Naive thymus-derived CD8-positive, alpha-beta T cell (primary cell): ENCODE measurements at regions of chr17 and their contacts with region 1.

Region 1: DNA sequence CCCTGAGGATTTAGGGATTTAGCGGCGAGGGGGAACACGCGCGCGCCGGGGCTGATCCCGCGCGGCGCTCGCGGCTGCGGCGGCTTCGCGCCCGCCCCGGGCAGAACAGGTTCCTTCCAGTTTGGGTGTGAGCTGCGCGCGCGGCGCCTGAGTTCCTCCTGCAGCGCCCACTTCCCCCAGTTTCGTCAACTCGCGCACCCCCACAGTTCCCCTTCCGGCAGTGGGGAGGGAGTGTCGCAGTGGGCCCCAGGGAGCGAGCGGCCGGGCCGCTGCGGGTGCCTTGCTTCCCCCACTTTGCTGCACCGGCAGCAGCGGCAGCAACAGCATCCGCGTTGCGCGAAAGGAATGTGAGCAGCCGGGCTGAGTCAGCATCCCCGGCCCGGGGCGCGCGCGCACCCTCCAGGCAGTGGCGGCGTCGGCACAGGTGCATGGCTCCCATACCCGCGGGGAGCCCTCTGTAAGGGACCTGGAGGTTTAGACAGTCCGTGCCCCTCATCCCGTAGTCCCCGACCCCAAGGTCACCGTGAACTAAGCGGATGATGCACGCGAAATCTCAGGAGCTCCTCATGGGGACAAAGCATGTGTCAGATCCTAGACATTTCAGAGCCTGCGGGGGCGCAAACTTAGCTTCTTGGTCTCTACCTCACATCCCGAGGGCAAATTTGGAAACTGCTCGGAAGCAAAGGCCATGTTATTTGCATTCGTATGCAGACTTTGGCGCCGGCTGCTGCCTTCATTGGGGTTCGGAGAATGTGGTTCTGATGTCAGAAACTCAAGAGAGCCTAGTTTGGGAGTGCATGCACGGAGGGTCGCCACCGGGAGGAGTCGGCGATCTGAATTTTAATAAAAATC is 775 bp downstream of the ARSG start:
- DNase-seq: peak; percentile 85 to 98 (median 96)
- ATAC-seq: peak; percentile 69 to 71
- H3K4me3 Mint-ChIP-seq: peak overlapping the region; percentile 77 to 94 (median 84)
- H3K27ac Mint-ChIP-seq: peak overlapping the region; percentile 81 to 95 (median 91)
- H3K4me1 Mint-ChIP-seq: peaks cover 38 to 72% (median 70%) of the 10 kb centered on the region in 4 donors
- H3K27me3 Mint-ChIP-seq: no peaks in the 10 kb centered on the region

Region 2: DNA sequence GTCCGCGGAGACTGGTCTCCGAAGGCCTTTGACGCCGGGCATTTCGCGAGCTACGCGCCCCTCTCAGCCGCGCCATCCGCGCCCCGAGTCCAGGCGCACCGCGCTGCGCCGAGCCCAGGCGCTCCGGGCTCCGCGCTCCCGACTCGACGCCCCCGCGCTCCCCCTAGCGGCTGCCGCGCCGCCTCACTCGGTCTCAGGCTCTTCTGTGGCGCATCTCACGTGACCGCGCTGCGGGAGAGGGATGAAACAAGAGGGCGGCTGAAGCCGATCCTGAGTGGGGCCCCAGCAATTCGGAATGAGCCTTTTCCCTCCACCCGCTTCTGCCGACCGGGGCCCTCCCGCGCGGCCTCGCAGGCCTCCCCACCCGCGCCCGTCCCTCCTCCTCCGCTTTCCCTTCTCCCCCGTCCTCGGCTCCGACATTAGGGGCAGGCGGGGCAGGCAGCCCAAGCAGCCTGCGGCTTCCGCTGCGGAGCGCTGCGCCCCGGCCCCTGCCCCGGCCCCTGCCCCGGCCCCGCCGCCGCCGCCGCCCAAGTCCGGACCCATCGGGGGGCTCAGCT is 86.7 kb before region 1 on chr17:
- POLR2A ChIA-PET with region 1: interaction called, 35 read pairs
- DNase-seq: peak; percentile 81 to 95 (median 92)
- ATAC-seq: peak; percentile 80 to 81
- H3K4me3 Mint-ChIP-seq: peak overlapping the region; percentile 78 to 95 (median 87)
- H3K27ac Mint-ChIP-seq: peak overlapping the region; percentile 43 to 97 (median 91)
- H3K4me1 Mint-ChIP-seq: peaks cover 11 to 43% (median 22%) of the 10 kb centered on the region in 4 donors
- H3K27me3 Mint-ChIP-seq: no peaks in the 10 kb centered on the region

Region 3: GRCh38 chr17:68277807-68278206 is 14.3 kb before region 1 on chr17:
- POLR2A ChIA-PET with region 1: interaction called, 21 read pairs
- DNase-seq: no peak
- ATAC-seq: no peak
- H3K4me3 Mint-ChIP-seq: no peak overlapping the region
- H3K27ac Mint-ChIP-seq: no peak overlapping the region
- H3K4me1 Mint-ChIP-seq: peaks cover 0 to 22% (median 6%) of the 10 kb centered on the region in 4 donors
- H3K27me3 Mint-ChIP-seq: no peaks in the 10 kb centered on the region

Region 4: DNA sequence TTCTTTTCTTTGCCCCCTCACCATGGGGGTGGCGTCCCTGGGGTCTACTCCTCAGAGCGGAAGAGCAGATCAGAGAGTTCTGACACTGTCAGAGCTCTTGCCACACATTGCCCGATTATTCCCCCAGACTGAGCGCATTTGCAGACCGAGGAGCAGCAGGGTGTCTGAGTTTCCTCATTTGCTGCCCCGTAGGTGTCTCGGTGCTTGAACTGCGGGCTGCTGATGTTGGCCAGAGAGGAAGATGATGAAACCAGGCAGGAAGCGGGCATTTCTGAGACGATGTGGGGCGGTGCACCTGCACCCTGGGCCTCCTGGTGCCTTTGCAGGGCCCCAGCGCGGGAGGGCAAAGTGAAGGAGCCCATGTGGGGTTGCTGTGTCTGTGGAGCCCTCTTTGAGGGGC is 54.4 kb after region 1 on chr17:
- POLR2A ChIA-PET with region 1: interaction called, 51 read pairs
- DNase-seq: peak; percentile 15 to 75 (median 54)
- ATAC-seq: peak; percentile 68 to 76
- H3K4me3 Mint-ChIP-seq: peak overlapping the region; percentile 65 to 88 (median 80)
- H3K27ac Mint-ChIP-seq: peak overlapping the region; percentile 83 to 98 (median 93)
- H3K4me1 Mint-ChIP-seq: peaks cover 35 to 76% (median 67%) of the 10 kb centered on the region in 4 donors
- H3K27me3 Mint-ChIP-seq: no peaks in the 10 kb centered on the region

Region 5: GRCh38 chr17:68398691-68399637 is 106.9 kb after region 1 on chr17:
- POLR2A ChIA-PET with region 1: interaction called, 25 read pairs
- DNase-seq: no peak
- ATAC-seq: peak in 1 of 2 donors; percentile 59
- H3K4me3 Mint-ChIP-seq: peak overlapping the region in 5 of 10 donors; percentile 14 to 66 (median 33)
- H3K27ac Mint-ChIP-seq: peak overlapping the region in 4 of 10 donors; percentile 5 to 35 (median 20)
- H3K4me1 Mint-ChIP-seq: peaks cover 15 to 34% (median 30%) of the 10 kb centered on the region in 4 donors
- H3K27me3 Mint-ChIP-seq: no peaks in the 10 kb centered on the region

Region 6: DNA sequence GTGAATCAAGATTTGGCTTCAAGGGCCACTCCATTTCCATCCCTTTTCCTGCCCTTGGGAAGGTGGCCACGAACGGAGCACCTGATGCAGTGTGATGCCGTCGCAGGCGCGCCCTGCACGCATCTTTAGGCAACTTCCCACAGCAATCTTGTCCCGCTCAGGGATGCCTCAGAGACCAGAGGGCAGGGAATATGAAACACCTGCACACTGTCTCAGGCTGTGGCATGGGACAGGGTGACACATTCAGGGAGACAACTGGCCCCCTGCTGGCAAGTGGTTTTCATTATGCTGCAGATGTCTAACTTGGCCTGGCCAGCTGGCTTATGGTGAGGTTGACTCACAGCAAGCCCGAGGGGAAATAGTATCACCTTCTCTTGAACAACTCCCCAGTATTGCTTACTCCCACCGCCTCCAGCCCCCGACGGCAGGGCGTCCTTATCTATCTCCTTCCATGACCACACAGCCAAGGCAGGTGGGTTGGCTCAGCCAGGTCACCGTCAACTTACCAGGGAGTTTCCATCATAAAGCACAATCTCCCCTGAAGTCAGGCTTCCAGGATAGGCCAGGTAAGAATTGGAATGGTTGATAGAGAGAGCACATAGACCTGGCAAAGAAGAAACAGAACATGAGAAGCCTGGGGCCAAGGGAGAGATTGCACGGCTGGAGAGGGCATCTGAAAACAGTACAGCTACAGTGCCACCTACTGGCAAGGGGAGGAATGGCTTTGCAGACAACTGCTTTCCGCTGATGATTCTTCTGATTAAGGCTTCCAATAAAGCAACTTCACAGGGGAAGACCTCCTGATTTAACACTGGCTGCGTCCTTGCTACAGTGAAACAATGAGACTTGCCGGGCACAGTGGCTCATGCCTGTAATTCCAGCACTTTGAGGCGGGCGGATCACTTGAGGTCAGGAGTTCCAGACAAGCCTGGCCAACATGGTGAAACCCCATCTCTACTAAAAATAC is 144.1 kb after region 1 on chr17:
- POLR2A ChIA-PET with region 1: interaction called, 94 read pairs
- DNase-seq: peak; percentile 64 to 90 (median 82)
- ATAC-seq: peak; percentile 69 to 73
- H3K4me3 Mint-ChIP-seq: peak overlapping the region in 9 of 10 donors; percentile 10 to 81 (median 51)
- H3K27ac Mint-ChIP-seq: peak overlapping the region in 9 of 10 donors; percentile 46 to 87 (median 74)
- H3K4me1 Mint-ChIP-seq: peaks cover 22 to 57% (median 56%) of the 10 kb centered on the region in 4 donors
- H3K27me3 Mint-ChIP-seq: no peaks in the 10 kb centered on the region

Region 7: GRCh38 chr17:68491381-68492231 is 199.5 kb after region 1 on chr17:
- POLR2A ChIA-PET with region 1: no interaction called
- DNase-seq: no peak
- ATAC-seq: no peak
- H3K4me3 Mint-ChIP-seq: no peak overlapping the region
- H3K27ac Mint-ChIP-seq: peak overlapping the region in 2 of 10 donors; percentile 48 to 51
- H3K4me1 Mint-ChIP-seq: peaks cover 6 to 36% (median 15%) of the 10 kb centered on the region in 4 donors
- H3K27me3 Mint-ChIP-seq: peaks cover 0 to 3% (median 0%) of the 10 kb centered on the region in 5 donors